ENCODE measurements at regions of chr17 and their contacts with region 1.

Region 1: GRCh38 chr17:8300627-8301242 is 5.5 kb upstream of the SLC25A35 start:
- DNase-seq: peak; percentile 46 to 78 (median 73)
- ATAC-seq: peak; percentile 87 to 88
- H3K4me3 ChIP-seq: no peak overlapping the region
- H3K27ac ChIP-seq: no peak overlapping the region
- H3K4me1 ChIP-seq: no peaks in the 10 kb centered on the region
- H3K27me3 ChIP-seq: no peaks in the 10 kb centered on the region

Region 2: DNA sequence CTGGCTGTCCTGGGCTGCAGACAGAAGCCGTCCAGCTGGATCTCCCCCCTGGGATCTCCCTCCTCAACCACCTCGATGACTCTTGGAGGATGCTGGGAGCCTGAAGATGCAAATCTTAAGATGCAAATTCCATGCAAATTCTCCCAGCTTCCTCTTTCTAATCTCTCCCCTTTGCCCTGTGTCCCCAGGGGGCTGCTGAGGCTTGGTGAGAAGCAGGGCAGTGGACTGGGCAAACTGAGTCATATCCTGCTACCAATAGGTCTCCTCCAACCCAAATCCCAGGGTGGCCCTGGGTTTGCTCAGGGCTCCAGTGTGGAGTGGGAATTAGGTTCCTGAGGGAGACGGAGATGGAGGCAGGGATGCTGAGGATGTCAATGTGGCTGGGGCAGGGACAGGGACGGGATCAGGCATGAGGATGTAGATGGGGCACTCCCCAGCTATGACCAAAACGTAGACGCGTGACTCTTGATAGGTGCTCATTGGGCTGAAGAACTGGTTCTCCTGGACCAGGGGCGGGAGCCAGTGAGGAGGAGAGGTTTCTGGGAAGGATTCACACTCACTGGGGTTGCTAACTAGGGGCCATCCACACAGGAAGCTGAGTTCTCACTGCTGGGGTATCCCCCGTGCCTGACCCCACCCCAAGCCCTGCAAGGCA is 209.6 kb before region 1 on chr17:
- intact Hi-C with region 1: loop called in 1 of 4 experiments (anchors 10 kb)
- DNase-seq: no peak
- ATAC-seq: peak in 1 of 2 donors; percentile 25
- H3K4me3 ChIP-seq: no peak overlapping the region
- H3K27ac ChIP-seq: no peak overlapping the region
- H3K4me1 ChIP-seq: no peaks in the 10 kb centered on the region
- H3K27me3 ChIP-seq: no peaks in the 10 kb centered on the region

Measured in right cardiac atrium (tissue), 5 donors.